A549 (cell line): ENCODE measurements at regions of chr14 and their contacts with region 1.

Region 1: DNA sequence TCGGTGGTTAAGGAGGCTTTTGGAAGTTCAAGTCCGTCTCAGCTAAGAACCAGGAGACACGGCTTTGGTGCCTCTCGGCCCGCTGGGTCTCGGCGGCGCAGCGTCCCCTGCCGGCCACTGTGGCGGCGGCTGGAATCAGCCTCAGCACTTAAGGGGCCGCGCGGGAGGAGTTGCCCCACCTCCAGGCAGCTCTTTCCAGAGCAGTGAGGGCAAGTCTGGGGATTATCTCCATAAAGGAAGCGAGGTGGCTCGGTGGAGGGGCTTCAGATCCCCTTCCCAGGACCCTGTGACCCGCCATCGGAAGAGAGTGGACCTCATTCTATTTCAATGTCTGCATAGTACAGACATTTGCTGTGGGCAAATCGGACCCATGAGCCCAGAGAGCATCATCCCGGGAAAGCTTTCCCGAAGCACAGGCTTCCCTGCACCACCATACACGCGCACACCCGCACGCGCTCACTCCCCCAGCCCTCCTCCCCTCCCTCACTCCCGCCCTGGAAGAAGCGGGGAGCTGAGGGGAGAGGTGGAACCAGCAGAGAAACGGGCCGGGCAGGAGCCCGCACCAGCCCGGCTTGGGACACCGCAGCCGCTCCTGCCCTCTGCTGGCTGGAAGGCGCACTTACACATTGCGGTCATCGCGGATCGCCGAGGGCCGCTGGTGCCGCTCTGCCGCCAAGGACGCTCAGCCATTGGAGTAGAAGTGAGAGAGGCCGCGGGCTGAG is 15.9 kb downstream of the RNASE2 start:
- DNase-seq: peak; percentile 76 to 87
- ATAC-seq: peak; percentile 93 to 95
- H3K4me3 ChIP-seq: peak overlapping the region; percentile 67
- H3K27ac ChIP-seq: peak overlapping the region; percentile 89 to 90
- H3K4me1 ChIP-seq: peaks cover 19% of the 10 kb centered on the region
- CTCF ChIP-seq: peak; percentile 86
- EP300 ChIP-seq: no peak
- POLR2A ChIP-seq: peak; percentile 47; the same call in 1 of the 2 replicates
- RAD21 ChIP-seq: peak; percentile 63 to 64

Region 2: DNA sequence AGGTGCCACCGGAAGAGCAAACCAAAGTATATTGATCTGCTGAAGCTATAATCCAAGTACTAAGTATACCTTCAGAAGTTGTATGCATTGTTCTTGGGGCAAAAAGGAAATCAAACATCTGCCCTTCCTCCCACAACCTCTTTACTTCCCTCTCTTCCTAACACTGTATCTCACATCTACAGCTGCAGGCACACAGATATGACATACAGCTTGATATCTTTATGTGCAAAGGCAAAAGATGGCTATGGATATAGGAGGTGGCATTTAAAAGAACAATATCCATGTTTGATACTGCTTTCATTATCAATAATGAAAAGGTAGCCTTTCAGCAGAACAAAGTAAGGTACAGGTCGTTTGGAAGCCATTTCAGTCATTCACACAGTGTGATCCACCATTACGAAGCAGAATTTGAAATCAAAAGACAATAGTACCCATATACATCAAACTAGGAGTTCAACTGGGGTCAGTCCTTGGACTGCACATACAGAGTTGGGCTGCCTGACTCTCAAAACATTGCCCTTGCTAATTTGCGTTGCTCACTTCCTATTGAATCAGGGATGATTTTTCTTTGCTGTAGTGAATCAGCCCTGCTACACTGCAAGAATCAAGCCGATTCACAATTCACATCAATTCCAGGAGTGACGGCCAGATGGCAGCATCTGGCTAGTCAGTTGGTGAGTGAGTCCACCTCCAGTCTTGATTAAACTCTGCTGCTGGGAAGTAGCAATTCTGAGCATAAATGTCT is 273.7 kb before region 1 on chr14:
- CTCF ChIA-PET with region 1: interaction called, 61 read pairs
- POLR2A ChIA-PET with region 1: no interaction called
- DNase-seq: peak; percentile 67 to 79
- ATAC-seq: peak; percentile 95 to 96
- H3K4me3 ChIP-seq: no peak overlapping the region
- H3K27ac ChIP-seq: no peak overlapping the region
- H3K4me1 ChIP-seq: 0 out of 3 replicates have a peak, but pooled peaks cover 3% of the 10 kb centered on the region
- CTCF ChIP-seq: peak; percentile 83
- EP300 ChIP-seq: no peak
- POLR2A ChIP-seq: no peak
- RAD21 ChIP-seq: peak; percentile 88 to 93

Region 3: DNA sequence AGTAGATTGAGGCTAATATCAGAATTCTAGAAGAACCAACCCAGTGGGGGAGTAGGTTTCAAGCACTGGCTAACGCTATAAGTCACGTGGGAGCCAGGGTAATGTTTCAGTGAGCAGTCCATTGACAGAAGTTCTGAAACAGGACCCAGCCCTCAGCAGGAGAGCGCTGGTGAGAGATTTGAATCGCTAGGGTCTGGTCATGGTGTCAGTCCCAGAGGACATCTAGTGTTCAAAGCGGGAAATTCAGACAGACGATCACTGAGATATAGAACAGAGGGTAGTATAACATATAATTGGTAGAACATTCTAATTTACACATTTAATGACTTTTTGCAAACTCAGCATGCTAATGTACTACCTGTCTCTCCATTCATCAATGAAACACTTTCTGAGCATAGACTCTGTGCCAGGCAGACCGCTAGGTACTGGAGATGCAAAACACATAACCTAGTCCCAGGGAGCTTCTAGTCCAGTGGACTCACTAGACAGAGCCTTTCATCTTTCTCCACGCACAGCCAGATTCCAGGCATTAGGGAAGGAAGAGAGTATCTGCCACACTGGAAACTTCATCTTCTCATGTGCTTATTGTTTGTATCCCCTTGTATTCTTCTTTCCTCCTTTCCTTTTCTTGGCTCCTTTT is 115.4 kb before region 1 on chr14:
- CTCF ChIA-PET with region 1: interaction called, 67 read pairs
- POLR2A ChIA-PET with region 1: interaction called, 11 read pairs
- DNase-seq: peak; percentile 69 to 83
- ATAC-seq: peak; percentile 97 to 98
- H3K4me3 ChIP-seq: no peak overlapping the region
- H3K27ac ChIP-seq: peak overlapping the region in 1 of 2 experiments; percentile 34; a peak in 2 of 6 replicates
- H3K4me1 ChIP-seq: peaks cover 26% of the 10 kb centered on the region
- CTCF ChIP-seq: peak; percentile 86
- EP300 ChIP-seq: no peak
- POLR2A ChIP-seq: no peak
- RAD21 ChIP-seq: peak; percentile 93

Region 4: DNA sequence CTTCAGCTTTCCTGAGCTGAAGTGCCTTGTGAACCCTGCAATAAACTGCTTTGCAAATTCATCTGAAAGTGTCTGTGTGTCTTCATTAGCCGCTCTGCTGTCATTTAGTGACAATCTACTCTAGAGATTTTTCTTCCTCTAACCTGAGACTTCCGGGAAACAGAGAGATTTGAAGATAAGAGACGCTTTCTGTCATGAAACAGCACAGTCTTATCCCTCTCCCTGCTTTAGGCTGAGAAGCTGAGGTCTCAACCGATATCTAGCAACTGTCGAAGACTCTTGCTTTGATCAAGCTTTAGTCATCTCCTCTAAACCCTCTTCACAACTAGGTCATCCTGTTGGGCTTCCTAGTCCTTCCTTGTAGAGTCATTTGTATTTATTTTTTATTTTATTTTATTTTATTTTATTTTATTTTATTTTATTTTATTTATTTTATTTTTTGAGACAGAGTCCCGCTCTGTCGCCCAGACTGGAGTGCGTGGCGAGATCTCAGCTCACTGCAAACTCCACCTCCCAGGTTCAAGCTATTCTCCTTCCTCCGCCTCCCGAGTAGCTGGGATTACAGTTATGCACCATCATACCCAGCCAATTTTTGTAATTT is 14.7 kb before region 1 on chr14:
- CTCF ChIA-PET with region 1: interaction called, 69 read pairs
- POLR2A ChIA-PET with region 1: interaction called, 7 read pairs
- DNase-seq: no peak
- ATAC-seq: no peak
- H3K4me3 ChIP-seq: no peak overlapping the region
- H3K27ac ChIP-seq: no peak overlapping the region
- H3K4me1 ChIP-seq: 0 out of 3 replicates have a peak, but pooled peaks cover 4% of the 10 kb centered on the region
- CTCF ChIP-seq: no peak
- EP300 ChIP-seq: no peak
- POLR2A ChIP-seq: no peak
- RAD21 ChIP-seq: no peak

Region 5: DNA sequence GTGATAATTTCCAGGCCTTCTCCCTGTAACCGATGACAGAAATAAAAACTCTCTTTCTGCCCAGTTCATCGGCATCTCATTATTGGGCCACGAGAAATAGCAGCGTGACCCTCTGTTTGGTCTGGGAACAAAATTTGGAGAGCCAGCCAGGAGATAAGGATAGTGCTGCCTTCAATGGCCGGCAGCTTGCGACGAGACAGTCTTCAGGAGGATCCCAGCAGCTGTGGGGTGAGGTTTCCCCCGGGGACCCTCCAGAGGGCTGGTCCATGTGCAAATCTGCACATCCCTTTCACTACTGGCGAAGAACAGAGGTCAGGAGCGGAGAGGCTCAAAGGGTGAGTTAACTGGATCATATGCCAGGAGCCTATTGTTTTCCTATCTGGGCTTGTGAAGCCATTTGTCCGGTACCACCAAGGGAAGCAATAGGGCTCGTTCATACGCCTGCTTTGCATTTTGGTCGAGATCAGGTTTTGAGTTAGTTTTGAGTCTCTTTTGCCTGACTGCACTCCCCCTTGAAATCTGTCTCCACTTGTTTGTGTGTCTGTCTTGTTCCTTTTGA is 32.7 kb after region 1 on chr14:
- CTCF ChIA-PET with region 1: interaction called, 26 read pairs
- POLR2A ChIA-PET with region 1: no interaction called
- DNase-seq: no peak
- ATAC-seq: no peak
- H3K4me3 ChIP-seq: no peak overlapping the region
- H3K27ac ChIP-seq: no peak overlapping the region
- H3K4me1 ChIP-seq: no peaks in the 10 kb centered on the region
- CTCF ChIP-seq: no peak
- EP300 ChIP-seq: no peak
- POLR2A ChIP-seq: no peak
- RAD21 ChIP-seq: no peak

Region 6: DNA sequence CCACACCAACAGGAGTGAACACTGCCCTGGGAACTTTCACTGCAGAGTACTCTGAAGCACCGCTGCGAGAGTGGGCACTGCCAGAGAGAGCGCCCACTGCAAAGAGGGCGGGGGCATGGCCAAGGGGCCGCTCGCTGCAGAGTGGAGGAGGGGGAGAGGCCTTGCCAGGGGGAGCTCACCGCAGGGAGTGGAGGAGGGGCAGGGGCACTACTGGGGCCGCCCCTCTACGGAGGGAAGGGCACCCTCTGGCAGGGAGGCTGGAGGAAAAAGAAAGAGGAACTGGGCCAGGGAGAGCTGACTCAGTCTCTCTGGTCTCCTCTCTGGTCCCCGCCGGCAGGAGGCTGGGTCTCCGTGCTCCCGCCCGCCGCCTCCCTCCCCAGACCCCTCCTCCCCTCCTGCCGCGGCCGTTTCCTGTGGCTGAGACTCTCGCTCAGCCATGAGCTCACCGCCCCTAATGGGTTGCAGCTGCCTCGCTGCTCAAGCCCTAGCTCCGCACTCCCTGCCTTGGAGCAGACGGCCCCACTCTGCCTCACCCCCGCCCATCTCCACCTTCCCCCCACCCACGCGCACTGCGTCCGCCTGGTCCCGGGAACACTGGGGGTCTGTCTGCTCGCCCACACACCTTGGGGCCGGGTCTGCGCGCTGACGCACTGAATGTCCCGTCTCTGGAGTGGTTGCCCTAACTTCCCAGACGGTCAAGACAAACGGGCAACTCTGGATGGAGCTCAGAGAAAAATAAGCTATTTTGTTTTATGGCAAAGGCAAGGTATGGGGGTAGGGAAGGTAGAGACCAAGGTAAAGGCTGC is 100.3 kb after region 1 on chr14:
- CTCF ChIA-PET with region 1: interaction called, 10 read pairs
- POLR2A ChIA-PET with region 1: interaction called, 3 read pairs
- DNase-seq: peak; percentile 37 to 58
- ATAC-seq: peak; percentile 45 to 67
- H3K4me3 ChIP-seq: peak overlapping the region; percentile 79
- H3K27ac ChIP-seq: peak overlapping the region; percentile 83 to 95
- H3K4me1 ChIP-seq: peaks cover 23% of the 10 kb centered on the region
- CTCF ChIP-seq: no peak
- EP300 ChIP-seq: no peak
- POLR2A ChIP-seq: no peak; the same call in 1 of the 2 replicates
- RAD21 ChIP-seq: no peak